Panc1 (cell line): ENCODE measurements at regions of chr10 and their contacts with region 1.

Region 1: DNA sequence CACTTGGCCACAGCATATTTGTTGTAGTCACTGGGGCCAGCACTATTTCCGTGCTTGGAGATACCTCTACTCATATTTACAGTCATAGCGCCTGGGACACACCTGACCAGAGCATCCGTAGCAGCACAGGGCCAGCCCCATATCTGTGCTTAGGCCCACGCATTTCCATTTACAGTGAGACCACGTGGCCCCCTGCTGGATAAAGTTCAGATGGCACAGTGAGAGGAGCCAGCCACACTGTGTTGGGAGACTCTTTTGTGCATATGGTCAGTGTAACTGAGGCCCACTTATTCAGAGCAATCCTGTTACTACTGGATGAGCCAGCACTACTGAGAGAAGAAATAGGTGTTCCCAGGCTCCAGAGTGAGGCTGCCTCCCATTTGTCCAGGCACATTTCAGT is 455.3 kb downstream of the REEP3 start:
- DNase-seq: peak; percentile 10
- ATAC-seq: peak; percentile 93
- H3K4me3 ChIP-seq: no peak overlapping the region
- H3K27ac ChIP-seq: no peak overlapping the region
- H3K4me1 ChIP-seq: no peaks in the 10 kb centered on the region
- H3K27me3 ChIP-seq: no peaks in the 10 kb centered on the region
- CTCF ChIP-seq: peak; percentile 69

Region 2: GRCh38 chr10:63866075-63866746 is 110.3 kb before region 1 on chr10:
- CTCF ChIA-PET with region 1: interaction called, 19 read pairs
- POLR2A ChIA-PET with region 1: no interaction called
- in situ Hi-C with region 1: no loop called
- intact Hi-C with region 1: loop called (anchors 2 kb)
- DNase-seq: peak; percentile 38
- ATAC-seq: peak; percentile 92
- H3K4me3 ChIP-seq: peak overlapping the region; percentile 3 to 23; a peak in 2 of 4 replicates
- H3K27ac ChIP-seq: no peak overlapping the region
- H3K4me1 ChIP-seq: peaks cover 10% of the 10 kb centered on the region
- H3K27me3 ChIP-seq: peaks cover 20% of the 10 kb centered on the region
- CTCF ChIP-seq: peak; percentile 96

Region 3: DNA sequence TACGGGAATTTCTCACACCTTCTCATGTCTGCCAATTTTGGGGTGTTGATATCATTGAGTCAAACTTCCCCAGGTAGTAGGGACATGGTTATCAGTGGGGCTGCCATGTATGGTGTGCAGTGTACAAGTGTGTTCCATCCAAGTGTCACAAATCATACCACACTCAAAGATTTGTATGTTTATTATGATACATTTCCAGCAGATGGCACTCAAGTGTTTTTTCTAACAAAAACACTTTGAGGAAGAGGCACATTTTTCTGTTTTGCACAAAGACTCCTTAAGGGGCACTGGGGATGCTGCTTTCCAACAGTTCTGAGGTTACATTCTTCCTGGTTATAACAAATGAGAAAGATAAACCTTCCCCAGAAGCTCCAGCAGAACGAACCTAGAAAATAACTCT is 40.8 kb before region 1 on chr10:
- CTCF ChIA-PET with region 1: interaction called, 11 read pairs
- POLR2A ChIA-PET with region 1: no interaction called
- in situ Hi-C with region 1: no loop called
- intact Hi-C with region 1: no loop called
- DNase-seq: no peak
- ATAC-seq: no peak
- H3K4me3 ChIP-seq: no peak overlapping the region
- H3K27ac ChIP-seq: no peak overlapping the region
- H3K4me1 ChIP-seq: no peaks in the 10 kb centered on the region
- H3K27me3 ChIP-seq: peaks cover 20% of the 10 kb centered on the region
- CTCF ChIP-seq: peak; percentile 41

Region 4: DNA sequence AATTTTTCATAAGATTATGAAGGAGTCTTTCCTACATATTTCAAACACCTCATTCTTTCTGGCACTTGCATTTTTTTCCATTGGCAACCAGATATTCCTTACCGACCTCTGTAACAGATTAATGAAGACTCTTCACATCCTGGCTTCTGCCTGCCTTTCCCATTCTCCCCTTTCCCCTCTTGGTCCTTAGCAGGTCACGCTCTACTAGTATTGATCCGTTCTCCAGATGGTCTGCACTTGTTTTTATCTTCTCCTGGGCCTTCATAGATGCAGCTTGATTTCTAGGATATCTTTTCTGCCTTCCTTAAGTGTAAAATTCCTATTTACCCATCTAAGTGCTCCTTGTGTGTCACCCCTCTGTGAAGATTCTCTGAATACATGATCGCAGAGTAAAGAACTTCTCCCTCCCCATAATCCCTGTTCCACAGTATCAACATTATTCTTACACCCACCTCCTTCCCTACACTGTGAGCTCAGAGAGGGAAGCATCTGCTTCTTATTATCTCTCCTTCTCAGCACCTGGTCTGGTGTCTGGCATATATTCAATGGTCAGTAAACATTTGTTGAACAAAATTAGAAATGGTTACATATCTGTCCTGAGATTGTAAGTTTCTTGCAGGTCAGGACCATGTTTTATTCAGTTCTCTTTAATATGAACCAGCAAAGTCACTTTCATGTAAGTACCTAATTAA is 198.9 kb after region 1 on chr10:
- CTCF ChIA-PET with region 1: no interaction called
- POLR2A ChIA-PET with region 1: no interaction called
- in situ Hi-C with region 1: no loop called
- intact Hi-C with region 1: no loop called
- DNase-seq: no peak
- ATAC-seq: no peak
- H3K4me3 ChIP-seq: no peak overlapping the region
- H3K27ac ChIP-seq: no peak overlapping the region
- H3K4me1 ChIP-seq: no peaks in the 10 kb centered on the region
- H3K27me3 ChIP-seq: no peaks in the 10 kb centered on the region
- CTCF ChIP-seq: no peak

Region 5: GRCh38 chr10:64312876-64313275 is 336.3 kb after region 1 on chr10:
- CTCF ChIA-PET with region 1: interaction called, 11 read pairs
- POLR2A ChIA-PET with region 1: no interaction called
- in situ Hi-C with region 1: no loop called
- intact Hi-C with region 1: no loop called
- DNase-seq: no peak
- ATAC-seq: no peak
- H3K4me3 ChIP-seq: no peak overlapping the region
- H3K27ac ChIP-seq: no peak overlapping the region
- H3K4me1 ChIP-seq: no peaks in the 10 kb centered on the region
- H3K27me3 ChIP-seq: no peaks in the 10 kb centered on the region
- CTCF ChIP-seq: no peak